Endothelial cell of umbilical vein (primary cell): ENCODE measurements at regions of chr14 and their contacts with region 1.

Region 1: DNA sequence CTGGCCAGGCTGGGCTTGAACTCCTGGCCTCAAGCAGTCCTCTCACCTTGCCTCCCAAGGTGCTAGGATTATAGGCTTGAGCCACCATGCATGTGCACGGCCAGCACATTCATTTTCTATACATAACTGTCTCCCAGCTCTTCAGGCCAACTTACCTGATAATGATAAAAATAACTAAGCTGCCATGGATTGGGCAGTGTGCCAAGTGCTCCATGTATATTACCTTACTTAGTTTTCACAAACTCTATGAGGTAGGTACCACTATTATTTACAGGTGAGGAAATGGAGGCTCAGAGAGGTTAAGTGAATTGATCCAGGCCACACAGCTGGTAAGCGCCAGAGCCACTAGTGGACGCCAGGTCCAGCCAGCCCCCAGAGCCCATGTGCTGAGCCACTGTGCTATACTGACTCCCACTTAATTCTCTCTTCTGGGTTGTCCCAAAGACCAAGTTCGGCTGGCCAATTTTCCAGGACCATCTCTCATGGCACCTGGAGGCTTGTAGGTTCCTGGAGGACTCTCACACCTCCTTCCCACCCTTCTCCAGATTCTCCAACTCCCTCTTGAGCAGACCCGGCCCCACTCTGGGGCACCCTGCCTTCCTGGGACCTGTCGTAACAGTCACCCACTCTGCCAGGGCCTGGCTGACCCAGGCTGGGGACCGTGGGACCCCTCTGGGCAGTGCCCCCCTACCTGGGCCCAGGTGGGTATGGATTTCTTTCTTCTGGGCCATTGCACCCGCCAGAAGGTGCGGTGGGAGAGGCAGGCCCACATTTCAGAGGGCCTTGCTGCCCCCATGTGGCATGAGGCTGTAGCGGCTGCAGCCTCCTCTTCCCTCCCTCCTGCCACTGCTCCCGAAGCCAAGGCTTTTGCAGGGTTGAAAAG is 30.2 kb upstream of the CIPC start:
- DNase-seq: peak; percentile 61
- H3K4me3 ChIP-seq: no peak overlapping the region
- H3K27ac ChIP-seq: no peak overlapping the region
- H3K4me1 ChIP-seq: no peaks in the 10 kb centered on the region
- H3K27me3 ChIP-seq: peaks cover 0 to 2% of the 10 kb centered on the region in 2 experiments
- CTCF ChIP-seq: peak; percentile 90 to 91
- POLR2A ChIP-seq: no peak

Region 2: GRCh38 chr14:76887196-76887595 is 180.7 kb before region 1 on chr14:
- CTCF ChIA-PET with region 1: interaction called, 13 read pairs
- POLR2A ChIA-PET with region 1: no interaction called
- dilution Hi-C with region 1: no loop called
- intact Hi-C with region 1: no loop called
- DNase-seq: no peak
- H3K4me3 ChIP-seq: no peak overlapping the region
- H3K27ac ChIP-seq: no peak overlapping the region
- H3K4me1 ChIP-seq: no peaks in the 10 kb centered on the region
- H3K27me3 ChIP-seq: peaks cover 13 to 15% of the 10 kb centered on the region in 2 experiments
- CTCF ChIP-seq: no peak
- POLR2A ChIP-seq: no peak

Region 3: GRCh38 chr14:76947078-76947837 is 120.6 kb before region 1 on chr14:
- CTCF ChIA-PET with region 1: interaction called, 10 read pairs
- POLR2A ChIA-PET with region 1: no interaction called
- dilution Hi-C with region 1: no loop called
- intact Hi-C with region 1: no loop called
- DNase-seq: peak; percentile 83
- H3K4me3 ChIP-seq: no peak overlapping the region
- H3K27ac ChIP-seq: peak overlapping the region; percentile 72
- H3K4me1 ChIP-seq: peaks cover 40% of the 10 kb centered on the region
- H3K27me3 ChIP-seq: no peaks in the 10 kb centered on the region
- CTCF ChIP-seq: peak; percentile 28 to 54
- POLR2A ChIP-seq: no peak

Region 4: DNA sequence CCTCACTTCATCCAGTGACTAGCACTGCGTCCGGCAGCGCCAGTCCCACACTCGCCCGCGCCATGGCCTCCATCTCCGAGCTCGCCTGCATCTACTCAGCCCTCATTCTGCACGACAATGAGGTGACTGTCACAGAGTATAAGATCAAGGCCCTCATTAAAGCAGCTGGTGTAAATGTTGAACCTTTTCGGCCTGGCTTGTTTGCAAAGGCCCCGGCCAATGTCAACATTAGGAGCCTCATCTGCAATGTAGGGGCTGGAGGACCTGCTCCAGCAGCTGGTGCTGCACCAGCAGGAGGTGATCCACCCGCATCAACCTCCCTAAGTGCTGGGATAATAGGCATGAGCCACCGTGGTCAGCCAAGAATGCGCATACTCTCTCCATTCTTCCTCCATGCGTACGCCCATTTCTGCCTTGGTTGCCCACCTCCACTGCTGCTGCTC is 99.2 kb before region 1 on chr14:
- CTCF ChIA-PET with region 1: interaction called, 3 read pairs
- POLR2A ChIA-PET with region 1: interaction called, 10 read pairs
- dilution Hi-C with region 1: no loop called
- intact Hi-C with region 1: no loop called
- DNase-seq: no peak
- H3K4me3 ChIP-seq: no peak overlapping the region
- H3K27ac ChIP-seq: no peak overlapping the region
- H3K4me1 ChIP-seq: no peaks in the 10 kb centered on the region
- H3K27me3 ChIP-seq: no peaks in the 10 kb centered on the region
- CTCF ChIP-seq: no peak
- POLR2A ChIP-seq: no peak

Region 5: GRCh38 chr14:77053046-77053841 is 14.6 kb before region 1 on chr14:
- CTCF ChIA-PET with region 1: interaction called, 6 read pairs
- POLR2A ChIA-PET with region 1: no interaction called
- dilution Hi-C with region 1: no loop called
- intact Hi-C with region 1: loop called (anchors 1 kb)
- DNase-seq: peak; percentile 81
- H3K4me3 ChIP-seq: no peak overlapping the region
- H3K27ac ChIP-seq: peak overlapping the region; percentile 6
- H3K4me1 ChIP-seq: peaks cover 11% of the 10 kb centered on the region
- H3K27me3 ChIP-seq: no peaks in the 10 kb centered on the region
- CTCF ChIP-seq: peak; percentile 95 to 96
- POLR2A ChIP-seq: no peak

Region 6: GRCh38 chr14:77097700-77098528 is 30.0 kb after region 1 on chr14 and contains the start of gene CIPC:
- CTCF ChIA-PET with region 1: interaction called, 27 read pairs
- POLR2A ChIA-PET with region 1: no interaction called
- dilution Hi-C with region 1: no loop called
- intact Hi-C with region 1: loop called (anchors 1 kb)
- DNase-seq: peak; percentile 99
- H3K4me3 ChIP-seq: peak within 1 kb of the TSS; percentile 30 to 72 (median 66)
- H3K27ac ChIP-seq: peak within 1 kb of the TSS; percentile 57
- H3K4me1 ChIP-seq: peaks cover 27% of the 10 kb centered on the region
- H3K27me3 ChIP-seq: no peaks in the 10 kb centered on the region
- CTCF ChIP-seq: no peak
- POLR2A ChIP-seq: no peak
- total RNA-seq, gene CIPC: 17.4 and 17.7 TPM in 2 replicates